Panc1 (cell line): ENCODE measurements at regions of chr12 and their contacts with region 1.

Region 1: DNA sequence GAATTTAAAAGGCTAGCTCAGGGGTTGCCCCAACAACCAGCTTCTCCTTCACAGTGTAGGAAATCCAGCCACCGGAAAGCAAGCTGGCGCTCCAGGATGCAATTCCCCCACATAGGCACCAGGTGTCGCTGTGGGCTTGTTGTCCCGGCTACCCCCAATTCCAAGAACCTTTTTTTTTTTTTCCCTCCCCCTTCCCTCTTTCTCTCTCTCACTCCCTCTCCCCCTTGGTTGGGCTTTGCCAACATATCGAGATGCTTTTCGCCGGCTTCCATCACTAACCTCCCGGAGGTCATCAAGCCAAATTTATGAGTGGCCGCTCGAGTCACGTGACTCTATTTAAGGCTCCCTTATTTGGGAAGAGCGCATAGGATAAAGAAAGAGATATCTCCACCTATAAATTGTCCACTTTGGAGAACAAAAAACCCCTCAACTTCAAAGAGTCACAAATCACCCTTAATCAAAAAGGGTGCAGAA is at the start of gene HOXC5:
- DNase-seq: peak; percentile 67
- ATAC-seq: peak; percentile 36; the same call in 1 of the 2 replicates
- H3K4me3 ChIP-seq: peak within 1 kb of the TSS in 1 of 2 experiments; percentile 12; a peak in 1 of 4 replicates
- H3K27ac ChIP-seq: peak within 1 kb of the TSS; percentile 78
- H3K4me1 ChIP-seq: peaks cover 95% of the 10 kb centered on the region
- H3K27me3 ChIP-seq: no peaks in the 10 kb centered on the region
- CTCF ChIP-seq: peak; percentile 98
- total RNA-seq, gene HOXC5: 5.0 TPM

Region 2: GRCh38 chr12:53830621-53831020 is 202.0 kb before region 1 on chr12:
- CTCF ChIA-PET with region 1: no interaction called
- POLR2A ChIA-PET with region 1: no interaction called
- in situ Hi-C with region 1: no loop called
- intact Hi-C with region 1: no loop called
- DNase-seq: no peak
- ATAC-seq: no peak
- H3K4me3 ChIP-seq: no peak overlapping the region
- H3K27ac ChIP-seq: peak overlapping the region; percentile 99
- H3K4me1 ChIP-seq: peaks cover 57% of the 10 kb centered on the region
- H3K27me3 ChIP-seq: no peaks in the 10 kb centered on the region
- CTCF ChIP-seq: peak; percentile 48

Region 3: GRCh38 chr12:53844989-53845844 is 187.4 kb before region 1 on chr12:
- CTCF ChIA-PET with region 1: no interaction called
- POLR2A ChIA-PET with region 1: no interaction called
- in situ Hi-C with region 1: no loop called
- intact Hi-C with region 1: no loop called
- DNase-seq: no peak
- ATAC-seq: peak; percentile 97
- H3K4me3 ChIP-seq: no peak overlapping the region
- H3K27ac ChIP-seq: peak overlapping the region; percentile 99
- H3K4me1 ChIP-seq: peaks cover 35% of the 10 kb centered on the region
- H3K27me3 ChIP-seq: no peaks in the 10 kb centered on the region
- CTCF ChIP-seq: no peak

Region 4: DNA sequence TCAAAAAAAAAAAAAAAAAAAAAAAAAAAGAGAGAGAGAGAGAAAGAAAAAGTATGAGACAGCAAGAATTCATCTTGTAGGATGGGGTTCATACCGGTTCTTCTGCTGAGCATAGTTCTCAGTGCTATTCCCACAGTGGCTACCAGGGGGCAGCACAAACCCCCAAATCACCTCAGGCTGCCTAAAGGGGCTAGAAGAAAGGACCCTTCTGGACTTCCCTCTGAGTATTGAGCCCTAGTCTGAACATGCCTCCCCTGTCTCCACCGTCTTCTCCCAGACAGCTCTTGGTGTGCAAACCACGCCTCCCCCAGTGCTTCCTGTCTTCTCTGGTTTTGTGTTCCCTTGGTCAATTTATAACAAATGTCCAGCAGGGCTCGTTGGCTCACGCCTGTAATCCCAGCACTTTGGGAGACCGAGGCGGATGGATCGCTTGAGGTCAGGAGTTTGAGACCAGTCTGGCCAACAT is 187.5 kb after region 1 on chr12:
- CTCF ChIA-PET with region 1: interaction called, 19 read pairs
- POLR2A ChIA-PET with region 1: no interaction called
- in situ Hi-C with region 1: no loop called
- intact Hi-C with region 1: no loop called
- DNase-seq: peak; percentile 75
- ATAC-seq: peak; percentile 58
- H3K4me3 ChIP-seq: peak overlapping the region; percentile 33 to 47
- H3K27ac ChIP-seq: peak overlapping the region; percentile 67
- H3K4me1 ChIP-seq: peaks cover 12% of the 10 kb centered on the region
- H3K27me3 ChIP-seq: no peaks in the 10 kb centered on the region
- CTCF ChIP-seq: peak; percentile 92